Activated CD4-positive, alpha-beta T cell treated with anti-CD3 and anti-CD28 coated beads for 36 hours (primary cell): ENCODE measurements at regions of chr19 and their contacts with region 1.

Region 1: GRCh38 chr19:15836595-15837337 is 21.3 kb upstream of the OR10H1 start:
- DNase-seq: peak; percentile 96
- ATAC-seq: peak; percentile 96
- H3K4me3 Mint-ChIP-seq: peak overlapping the region; percentile 85
- H3K27ac Mint-ChIP-seq: peak overlapping the region; percentile 98
- H3K4me1 Mint-ChIP-seq: peaks cover 15% of the 10 kb centered on the region
- H3K27me3 Mint-ChIP-seq: no peaks in the 10 kb centered on the region

Region 2: DNA sequence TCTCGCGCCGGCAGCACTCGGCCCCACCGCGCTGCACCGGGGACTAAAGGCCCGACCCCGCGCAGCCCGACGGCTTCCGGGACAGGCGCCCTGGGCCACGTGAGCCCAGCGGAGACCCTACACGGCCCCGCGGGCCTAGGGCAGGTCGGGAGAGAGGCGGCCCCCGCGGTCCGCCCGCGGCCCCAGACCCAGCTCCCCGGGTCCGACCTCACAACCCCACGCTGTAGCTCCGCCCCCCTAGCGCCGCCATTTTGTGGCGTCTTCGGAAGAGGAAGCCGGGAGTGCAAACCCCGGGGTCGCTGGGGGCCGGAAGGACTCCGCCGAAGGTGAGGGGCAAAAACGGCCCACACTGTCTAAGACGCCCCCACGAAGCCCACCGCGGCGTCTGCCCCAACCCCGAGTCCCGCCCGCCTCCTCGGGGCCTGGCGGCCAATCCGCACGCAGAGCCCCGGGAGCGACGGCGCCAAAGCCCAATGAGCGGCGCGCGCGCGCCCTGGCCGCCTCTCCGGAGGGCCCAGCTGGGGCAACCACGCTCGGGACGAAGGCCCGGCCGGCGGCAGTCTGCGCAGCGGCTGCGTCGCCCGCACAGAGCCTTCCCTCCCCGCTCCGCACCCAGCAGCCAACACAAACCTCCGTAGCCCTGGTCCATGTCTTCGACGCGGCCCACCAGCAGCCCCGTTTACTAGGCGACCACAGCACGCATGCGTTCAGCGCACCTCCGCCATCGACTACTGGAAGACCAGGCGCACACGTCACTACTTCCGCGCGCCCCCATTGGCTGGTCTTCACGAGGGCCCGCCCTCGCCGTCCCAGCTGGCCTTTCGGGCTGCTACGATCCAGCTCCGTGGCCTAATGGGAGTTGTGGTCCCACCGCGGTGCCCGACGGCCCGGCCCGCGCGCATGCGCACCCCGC is 457.4 kb before region 1 on chr19 and contains the start of gene AKAP8:
- CTCF ChIA-PET with region 1: no interaction called
- POLR2A ChIA-PET with region 1: no interaction called
- intact Hi-C with region 1: loop called in 1 of 2 experiments (anchors 2 kb)
- DNase-seq: peak; percentile 99
- ATAC-seq: peak; percentile 91
- H3K4me3 Mint-ChIP-seq: peak within 1 kb of the TSS; percentile 88
- H3K27ac Mint-ChIP-seq: peak within 1 kb of the TSS; percentile 100
- H3K4me1 Mint-ChIP-seq: peaks cover 37% of the 10 kb centered on the region
- H3K27me3 Mint-ChIP-seq: no peaks in the 10 kb centered on the region
- total RNA-seq, gene AKAP8: 47.9 to 54.3 TPM

Region 3: GRCh38 chr19:16001481-16002312 is 164.9 kb after region 1 on chr19:
- CTCF ChIA-PET with region 1: no interaction called
- POLR2A ChIA-PET with region 1: no interaction called
- intact Hi-C with region 1: loop called in 1 of 2 experiments (anchors 2 kb)
- DNase-seq: peak; percentile 69
- ATAC-seq: peak; percentile 98
- H3K4me3 Mint-ChIP-seq: peak overlapping the region; percentile 61
- H3K27ac Mint-ChIP-seq: peak overlapping the region; percentile 86
- H3K4me1 Mint-ChIP-seq: peaks cover 28% of the 10 kb centered on the region
- H3K27me3 Mint-ChIP-seq: no peaks in the 10 kb centered on the region

Region 4: DNA sequence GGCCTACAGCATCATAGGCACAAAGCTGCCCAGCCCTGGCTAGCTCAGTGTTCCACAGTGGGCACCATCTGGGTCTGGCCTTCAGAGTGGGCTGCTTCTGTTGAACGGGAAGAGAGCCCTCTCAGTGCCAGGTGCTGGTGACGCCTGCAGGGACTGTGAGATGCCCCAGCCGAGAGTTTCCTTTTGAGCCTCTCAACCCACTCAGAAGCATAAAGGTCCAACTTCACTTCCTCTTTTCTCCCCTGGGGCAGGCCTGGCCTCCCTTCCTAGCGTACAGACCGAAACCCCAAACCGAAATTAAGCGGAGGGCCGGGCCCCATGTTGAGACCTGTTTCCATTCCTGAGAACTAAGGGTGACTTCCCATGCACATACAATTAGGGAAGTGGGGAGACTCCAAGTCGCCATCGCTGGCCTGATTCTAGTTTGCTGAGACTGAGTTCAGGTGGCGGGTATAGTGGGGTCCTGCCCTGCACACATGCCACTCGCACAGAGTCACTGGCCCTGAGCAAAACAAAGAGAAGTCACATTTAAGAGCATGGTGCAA is 281.8 kb after region 1 on chr19:
- CTCF ChIA-PET with region 1: no interaction called
- POLR2A ChIA-PET with region 1: no interaction called
- intact Hi-C with region 1: loop called in 1 of 2 experiments (anchors 2 kb)
- DNase-seq: peak; percentile 74
- ATAC-seq: peak; percentile 75
- H3K4me3 Mint-ChIP-seq: peak overlapping the region; percentile 35
- H3K27ac Mint-ChIP-seq: peak overlapping the region; percentile 89
- H3K4me1 Mint-ChIP-seq: peaks cover 59% of the 10 kb centered on the region
- H3K27me3 Mint-ChIP-seq: no peaks in the 10 kb centered on the region

Region 5: GRCh38 chr19:16495982-16496612 is 659.3 kb after region 1 on chr19 and contains the starts of genes C19orf44 and CALR3:
- CTCF ChIA-PET with region 1: no interaction called
- POLR2A ChIA-PET with region 1: no interaction called
- intact Hi-C with region 1: loop called in 1 of 2 experiments (anchors 2 kb)
- DNase-seq: peak; percentile 99
- ATAC-seq: peak; percentile 99
- H3K4me3 Mint-ChIP-seq: peak within 1 kb of the TSS; percentile 89
- H3K27ac Mint-ChIP-seq: peak within 1 kb of the TSS; percentile 79
- H3K4me1 Mint-ChIP-seq: peaks cover 13% of the 10 kb centered on the region
- H3K27me3 Mint-ChIP-seq: no peaks in the 10 kb centered on the region
- total RNA-seq, gene C19orf44: 2.9 to 4.0 TPM
- total RNA-seq, gene CALR3: not detected